Vagina (tissue), 2 donors: ENCODE measurements at regions of chr1 and their contacts with region 1.

Region 1: GRCh38 chr1:52427152-52427551 is 22.8 kb downstream of the PRPF38A start:
- DNase-seq: no peak
- H3K4me3 ChIP-seq: no peak overlapping the region
- H3K27ac ChIP-seq: no peak overlapping the region
- H3K4me1 ChIP-seq: no peaks in the 10 kb centered on the region
- H3K27me3 ChIP-seq: no peaks in the 10 kb centered on the region
- CTCF ChIP-seq: no peak
- POLR2A ChIP-seq: no peak

Region 2: GRCh38 chr1:52404116-52404986 is 22.8 kb before region 1 on chr1 and contains the starts of genes ORC1 and PRPF38A:
- intact Hi-C with region 1: loop called (anchors 1 kb)
- DNase-seq: peak in 1 of 2 donors; percentile 97
- H3K4me3 ChIP-seq: peak within 1 kb of the TSS; percentile 87 to 93
- H3K27ac ChIP-seq: peak within 1 kb of the TSS; percentile 89
- H3K4me1 ChIP-seq: peaks cover 22% of the 10 kb centered on the region
- H3K27me3 ChIP-seq: no peaks in the 10 kb centered on the region
- CTCF ChIP-seq: no peak
- POLR2A ChIP-seq: peak in 1 of 2 donors; percentile 27
- total RNA-seq, gene ORC1: 1.7 TPM
- total RNA-seq, gene PRPF38A: 17.7 TPM